ENCODE measurements at regions of chr22 and their contacts with region 1.

Region 1: GRCh38 chr22:22935546-22936157 is 48.0 kb downstream of the IGLL5 start:
- DNase-seq: no peak
- ATAC-seq: no peak
- H3K4me3 ChIP-seq: no peak overlapping the region
- H3K27ac ChIP-seq: no peak overlapping the region
- H3K4me1 ChIP-seq: peaks cover 0 to 11% (median 0%) of the 10 kb centered on the region in 9 donors
- H3K27me3 ChIP-seq: peaks cover 0 to 9% (median 0%) of the 10 kb centered on the region in 7 donors
- CTCF ChIP-seq: no peak

Region 2: DNA sequence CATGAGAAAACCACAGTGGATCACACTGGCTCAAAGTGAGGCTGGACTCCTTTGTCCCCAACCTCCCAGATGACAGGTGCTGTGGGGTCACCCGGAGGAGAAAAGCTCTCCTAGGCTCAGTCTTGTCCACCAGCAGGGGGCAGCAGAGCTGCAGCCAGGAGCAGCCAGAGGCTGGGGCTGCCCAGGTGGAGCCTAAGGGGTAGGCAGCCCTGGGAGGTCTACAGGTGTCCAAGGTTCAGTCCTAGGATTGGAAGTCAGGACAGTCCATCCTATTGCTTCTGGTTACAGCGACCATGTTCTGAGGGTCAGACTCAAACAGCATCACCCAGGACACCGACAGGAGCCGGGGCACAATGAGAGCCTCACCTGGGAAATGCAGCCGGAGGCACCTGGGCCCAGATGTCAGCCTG is 125.6 kb before region 1 on chr22:
- intact Hi-C with region 1: loop called in 1 of 10 experiments (anchors 10 kb)
- DNase-seq: peak in 1 of 2 donors; percentile 40
- ATAC-seq: peak in 6 of 8 donors; percentile 46 to 74 (median 70)
- H3K4me3 ChIP-seq: no peak overlapping the region
- H3K27ac ChIP-seq: no peak overlapping the region
- H3K4me1 ChIP-seq: no peaks in the 10 kb centered on the region
- H3K27me3 ChIP-seq: peaks cover 0 to 33% (median 5%) of the 10 kb centered on the region in 7 donors
- CTCF ChIP-seq: peak in 8 of 9 donors; percentile 31 to 86 (median 74)

Measured in heart right ventricle (tissue), 16 donors.